Natural killer cell (primary cell): ENCODE measurements at regions of chr17 and their contacts with region 1.

Region 1: DNA sequence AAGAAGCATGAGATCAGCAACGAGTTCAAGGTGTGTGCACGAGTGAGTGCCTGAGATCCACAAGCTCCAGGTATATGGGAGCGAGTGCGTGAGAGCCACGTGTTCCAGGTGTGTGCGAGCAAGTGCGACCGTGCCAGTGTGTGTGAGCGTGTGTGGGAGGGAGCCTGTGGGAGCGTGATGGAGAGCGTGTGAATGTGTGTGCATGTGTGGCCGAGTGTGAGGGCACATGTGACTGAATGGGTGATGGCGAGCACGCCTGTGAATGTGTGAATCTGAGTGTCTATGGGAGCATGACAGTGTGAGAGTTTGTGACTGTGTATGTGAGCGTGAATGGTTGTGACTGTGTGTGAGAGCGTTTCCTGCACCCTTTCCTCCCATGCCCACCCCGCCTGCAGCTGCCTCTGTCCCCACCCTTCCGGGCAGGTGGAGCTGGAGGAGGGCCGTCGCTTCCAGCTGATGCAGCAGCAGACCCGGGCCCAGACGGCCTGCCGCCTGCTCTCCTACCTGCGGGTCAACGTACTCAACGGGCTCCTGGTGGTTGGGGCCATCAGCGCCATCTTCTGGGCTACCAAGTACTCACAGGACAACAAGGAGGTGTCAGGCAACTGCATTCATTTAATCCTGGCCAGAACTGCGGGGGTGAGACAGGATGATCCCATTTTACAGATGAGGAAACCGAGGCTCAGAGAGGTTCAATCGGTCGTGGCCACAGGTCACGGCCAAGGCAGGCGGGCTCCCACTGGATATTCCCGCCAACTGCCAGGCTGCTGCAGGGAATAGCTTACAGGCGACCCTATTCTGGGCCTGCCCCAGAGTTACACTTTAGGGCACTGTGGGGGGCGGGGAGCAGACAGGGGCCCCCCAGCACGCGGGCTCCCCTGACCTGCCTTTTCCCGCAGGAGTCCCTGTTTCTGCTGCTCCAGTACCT is 3.7 kb downstream of the TMC8 start:
- DNase-seq: peak; percentile 70 to 92
- ATAC-seq: peak; percentile 32 to 48 (median 43)
- H3K4me3 ChIP-seq: peak overlapping the region; percentile 12
- H3K4me3 Mint-ChIP-seq: peak overlapping the region; percentile 59
- H3K27ac ChIP-seq: peak overlapping the region; percentile 72
- H3K27ac Mint-ChIP-seq: peak overlapping the region; percentile 83 to 99
- H3K4me1 ChIP-seq: peaks cover 85% of the 10 kb centered on the region
- H3K4me1 Mint-ChIP-seq: peaks cover 74 to 83% of the 10 kb centered on the region in 2 donors
- H3K27me3 ChIP-seq: no peaks in the 10 kb centered on the region
- H3K27me3 Mint-ChIP-seq: no peaks in the 10 kb centered on the region
- CTCF ChIP-seq: peak; percentile 65

Region 2: DNA sequence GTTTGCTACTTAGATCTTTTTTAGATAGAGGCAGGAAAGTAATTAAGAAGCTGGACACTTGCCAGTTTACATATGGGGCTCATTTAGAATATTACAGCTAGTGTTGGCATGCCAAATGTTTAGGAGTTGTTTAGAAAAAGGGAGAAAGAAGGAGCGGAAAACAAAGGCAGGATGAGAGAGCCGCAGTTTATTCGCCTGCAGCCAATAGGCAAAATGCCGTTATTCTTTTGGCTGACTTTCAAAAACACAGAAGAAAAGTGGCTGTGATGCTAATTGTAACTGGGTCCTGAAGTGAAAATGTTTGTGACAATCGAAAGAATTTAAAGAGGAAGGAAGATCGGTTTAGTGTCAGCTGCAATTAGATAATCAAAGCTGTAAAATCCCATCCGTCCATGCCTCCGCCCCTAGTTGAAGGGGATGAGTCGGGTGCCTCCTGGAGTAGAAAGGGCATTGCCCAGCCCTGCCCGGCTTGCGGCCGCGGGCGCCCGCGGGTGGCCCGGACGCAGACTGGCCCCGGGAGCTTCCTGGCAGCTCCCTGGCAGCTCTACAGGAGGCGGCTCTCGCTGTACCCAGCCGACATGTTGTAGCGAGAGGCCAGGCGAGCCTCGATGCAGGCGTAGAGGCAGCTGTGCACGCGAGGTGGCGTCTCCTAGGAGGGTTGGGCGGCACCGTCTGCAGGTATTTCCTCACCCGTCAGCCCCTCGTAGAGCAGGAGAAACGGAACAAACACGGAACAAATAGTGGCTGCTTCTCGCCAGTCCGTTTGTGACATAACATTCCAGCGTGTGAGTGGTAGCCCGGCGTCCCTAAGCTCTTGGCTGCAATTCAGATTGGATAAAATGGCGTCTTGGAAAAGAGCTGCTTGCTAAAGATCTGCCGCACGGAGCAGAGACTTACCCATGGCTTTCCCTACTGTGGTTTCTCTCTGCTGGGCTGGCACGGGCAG is 93.5 kb before region 1 on chr17:
- intact Hi-C with region 1: no loop called
- DNase-seq: peak in 1 of 2 donors; percentile 71
- ATAC-seq: peak in 2 of 3 donors; percentile 44 to 84
- H3K4me3 ChIP-seq: peak overlapping the region; percentile 23
- H3K4me3 Mint-ChIP-seq: peak overlapping the region; percentile 76
- H3K27ac ChIP-seq: no peak overlapping the region
- H3K27ac Mint-ChIP-seq: peak overlapping the region; percentile 6 to 21
- H3K4me1 ChIP-seq: peaks cover 5% of the 10 kb centered on the region
- H3K4me1 Mint-ChIP-seq: peaks cover 35 to 41% of the 10 kb centered on the region in 2 donors
- H3K27me3 ChIP-seq: no peaks in the 10 kb centered on the region
- H3K27me3 Mint-ChIP-seq: no peaks in the 10 kb centered on the region
- CTCF ChIP-seq: no peak

Region 3: GRCh38 chr17:78112518-78113226 is 21.6 kb before region 1 on chr17:
- intact Hi-C with region 1: loop called (anchors 1 kb)
- DNase-seq: peak; percentile 83 to 85
- ATAC-seq: peak; percentile 66 to 82 (median 71)
- H3K4me3 ChIP-seq: no peak overlapping the region
- H3K4me3 Mint-ChIP-seq: peak overlapping the region; percentile 72
- H3K27ac ChIP-seq: peak overlapping the region; percentile 73
- H3K27ac Mint-ChIP-seq: peak overlapping the region; percentile 79 to 91
- H3K4me1 ChIP-seq: peaks cover 40% of the 10 kb centered on the region
- H3K4me1 Mint-ChIP-seq: peaks cover 35 to 49% of the 10 kb centered on the region in 2 donors
- H3K27me3 ChIP-seq: no peaks in the 10 kb centered on the region
- H3K27me3 Mint-ChIP-seq: no peaks in the 10 kb centered on the region
- CTCF ChIP-seq: peak; percentile 98

Region 4: DNA sequence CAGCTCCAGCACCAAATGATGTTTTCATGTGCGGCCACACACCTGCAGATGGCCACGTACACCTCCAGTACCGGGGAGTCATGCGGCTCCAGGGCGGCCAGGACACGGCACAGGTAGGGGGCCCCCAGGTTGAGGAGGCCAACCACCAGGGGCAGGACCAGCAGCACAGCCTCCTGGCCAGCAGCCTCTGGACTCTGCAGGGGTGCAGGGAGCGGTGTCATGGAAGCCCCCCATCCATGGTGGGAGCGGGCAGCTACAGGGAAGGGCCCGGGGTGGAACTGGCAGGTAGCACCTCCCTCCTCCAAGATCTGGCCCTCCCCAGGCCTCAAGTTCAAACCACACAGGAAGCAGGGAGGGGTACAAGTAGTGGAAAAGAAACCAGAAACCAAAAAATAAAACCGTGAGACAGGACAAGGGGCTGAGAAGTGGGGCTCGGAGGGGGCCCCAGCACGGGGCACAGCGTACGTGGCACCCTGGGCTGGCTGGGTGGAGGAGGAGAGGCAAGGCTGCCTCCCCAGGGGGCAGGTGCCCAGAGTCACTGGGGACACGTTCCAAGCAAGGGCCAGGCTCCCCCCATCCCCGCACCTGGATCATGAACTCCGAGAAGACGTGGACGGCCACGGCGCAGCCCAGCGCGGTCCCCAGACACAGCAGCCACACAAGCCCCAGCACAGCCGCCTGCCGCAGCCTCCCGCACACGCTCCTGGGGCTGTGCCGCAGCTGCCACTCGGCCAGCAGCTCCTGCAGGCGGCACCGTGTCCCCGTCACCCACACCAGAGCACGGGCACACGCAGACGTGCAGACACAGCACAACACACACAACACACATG is 13.0 kb before region 1 on chr17:
- intact Hi-C with region 1: loop called (anchors 1 kb)
- DNase-seq: peak in 1 of 2 donors; percentile 79
- ATAC-seq: peak; percentile 42 to 55 (median 51)
- H3K4me3 ChIP-seq: peak overlapping the region; percentile 2
- H3K4me3 Mint-ChIP-seq: peak overlapping the region; percentile 86
- H3K27ac ChIP-seq: peak overlapping the region; percentile 57
- H3K27ac Mint-ChIP-seq: peak overlapping the region; percentile 82 to 84
- H3K4me1 ChIP-seq: peaks cover 83% of the 10 kb centered on the region
- H3K4me1 Mint-ChIP-seq: peaks cover 32 to 59% of the 10 kb centered on the region in 2 donors
- H3K27me3 ChIP-seq: no peaks in the 10 kb centered on the region
- H3K27me3 Mint-ChIP-seq: no peaks in the 10 kb centered on the region
- CTCF ChIP-seq: no peak

Region 5: GRCh38 chr17:79803997-79804855 is 1670.0 kb after region 1 on chr17:
- intact Hi-C with region 1: loop called (anchors 5 kb)
- DNase-seq: peak in 1 of 2 donors; percentile 70
- ATAC-seq: peak in 2 of 3 donors; percentile 48 to 55
- H3K4me3 ChIP-seq: no peak overlapping the region
- H3K4me3 Mint-ChIP-seq: peak overlapping the region; percentile 81
- H3K27ac ChIP-seq: no peak overlapping the region
- H3K27ac Mint-ChIP-seq: peak overlapping the region; percentile 75 to 76
- H3K4me1 ChIP-seq: peaks cover 60% of the 10 kb centered on the region
- H3K4me1 Mint-ChIP-seq: peaks cover 26 to 44% of the 10 kb centered on the region in 2 donors
- H3K27me3 ChIP-seq: peaks cover 98% of the 10 kb centered on the region
- H3K27me3 Mint-ChIP-seq: peaks cover 65 to 72% of the 10 kb centered on the region in 2 donors
- CTCF ChIP-seq: no peak